Naive thymus-derived CD4-positive, alpha-beta T cell (primary cell): ENCODE measurements at regions of chr1 and their contacts with region 1.

Region 1: GRCh38 chr1:28505406-28506187 is at the start of gene RCC1:
- DNase-seq: peak; percentile 78 to 98 (median 96)
- ATAC-seq: peak; percentile 97
- H3K4me3 ChIP-seq: peak within 1 kb of the TSS; percentile 79
- H3K4me3 Mint-ChIP-seq: peak within 1 kb of the TSS; percentile 94 to 100 (median 99)
- H3K27ac ChIP-seq: peak within 1 kb of the TSS; percentile 88
- H3K27ac Mint-ChIP-seq: peak within 1 kb of the TSS; percentile 96 to 100 (median 99)
- H3K4me1 ChIP-seq: peaks cover 29 to 36% of the 10 kb centered on the region in 2 donors
- H3K4me1 Mint-ChIP-seq: peaks cover 29 to 48% (median 41%) of the 10 kb centered on the region in 7 donors
- H3K27me3 ChIP-seq: no peaks in the 10 kb centered on the region
- H3K27me3 Mint-ChIP-seq: peaks cover 0 to 3% (median 0%) of the 10 kb centered on the region in 5 donors
- total RNA-seq, gene RCC1: 9.8 to 60.7 (median 19.7) TPM

Region 2: GRCh38 chr1:27830621-27831424 is 674.8 kb before region 1 on chr1 and contains the start of gene PPP1R8:
- CTCF ChIA-PET with region 1: no interaction called
- POLR2A ChIA-PET with region 1: no interaction called
- intact Hi-C with region 1: loop called in 1 of 2 experiments (anchors 5 kb)
- DNase-seq: peak; percentile 57 to 89 (median 86)
- ATAC-seq: peak; percentile 100
- H3K4me3 ChIP-seq: peak within 1 kb of the TSS; percentile 71
- H3K4me3 Mint-ChIP-seq: peak within 1 kb of the TSS; percentile 90 to 96 (median 93)
- H3K27ac ChIP-seq: peak within 1 kb of the TSS; percentile 92
- H3K27ac Mint-ChIP-seq: peak within 1 kb of the TSS; percentile 86 to 96 (median 92)
- H3K4me1 ChIP-seq: peaks cover 16% of the 10 kb centered on the region in 2 donors
- H3K4me1 Mint-ChIP-seq: peaks cover 16 to 51% (median 38%) of the 10 kb centered on the region in 7 donors
- H3K27me3 ChIP-seq: no peaks in the 10 kb centered on the region
- H3K27me3 Mint-ChIP-seq: no peaks in the 10 kb centered on the region
- total RNA-seq, gene PPP1R8: 17.5 to 60.2 (median 39.5) TPM

Region 3: GRCh38 chr1:28369371-28370238 is 136.0 kb before region 1 on chr1 and contains the start of gene PHACTR4:
- CTCF ChIA-PET with region 1: no interaction called
- POLR2A ChIA-PET with region 1: interaction called, 4 read pairs
- intact Hi-C with region 1: loop called (anchors 2 to 5 kb)
- DNase-seq: peak; percentile 54 to 81 (median 66)
- ATAC-seq: peak; percentile 96
- H3K4me3 ChIP-seq: peak within 1 kb of the TSS; percentile 74
- H3K4me3 Mint-ChIP-seq: peak within 1 kb of the TSS; percentile 82 to 98 (median 94)
- H3K27ac ChIP-seq: peak within 1 kb of the TSS; percentile 79
- H3K27ac Mint-ChIP-seq: peak within 1 kb of the TSS; percentile 88 to 99 (median 91)
- H3K4me1 ChIP-seq: peaks cover 10 to 11% of the 10 kb centered on the region in 2 donors
- H3K4me1 Mint-ChIP-seq: peaks cover 11 to 40% (median 35%) of the 10 kb centered on the region in 7 donors
- H3K27me3 ChIP-seq: no peaks in the 10 kb centered on the region
- H3K27me3 Mint-ChIP-seq: peaks cover 0 to 2% (median 0%) of the 10 kb centered on the region in 5 donors
- total RNA-seq, gene PHACTR4: 19.8 to 29.0 (median 25.7) TPM

Region 4: GRCh38 chr1:28494737-28495136 is 10.9 kb before region 1 on chr1:
- CTCF ChIA-PET with region 1: interaction called, 4 read pairs
- POLR2A ChIA-PET with region 1: interaction called, 20 read pairs
- intact Hi-C with region 1: no loop called
- DNase-seq: peak in 1 of 9 donors; percentile 18
- ATAC-seq: no peak
- H3K4me3 ChIP-seq: no peak overlapping the region
- H3K4me3 Mint-ChIP-seq: peak overlapping the region in 6 of 10 donors; percentile 5 to 57 (median 32)
- H3K27ac ChIP-seq: peak overlapping the region; percentile 53
- H3K27ac Mint-ChIP-seq: peak overlapping the region; percentile 78 to 92 (median 85)
- H3K4me1 ChIP-seq: no peaks in the 10 kb centered on the region
- H3K4me1 Mint-ChIP-seq: peaks cover 6 to 24% (median 17%) of the 10 kb centered on the region in 7 donors
- H3K27me3 ChIP-seq: no peaks in the 10 kb centered on the region
- H3K27me3 Mint-ChIP-seq: no peaks in the 10 kb centered on the region

Region 5: DNA sequence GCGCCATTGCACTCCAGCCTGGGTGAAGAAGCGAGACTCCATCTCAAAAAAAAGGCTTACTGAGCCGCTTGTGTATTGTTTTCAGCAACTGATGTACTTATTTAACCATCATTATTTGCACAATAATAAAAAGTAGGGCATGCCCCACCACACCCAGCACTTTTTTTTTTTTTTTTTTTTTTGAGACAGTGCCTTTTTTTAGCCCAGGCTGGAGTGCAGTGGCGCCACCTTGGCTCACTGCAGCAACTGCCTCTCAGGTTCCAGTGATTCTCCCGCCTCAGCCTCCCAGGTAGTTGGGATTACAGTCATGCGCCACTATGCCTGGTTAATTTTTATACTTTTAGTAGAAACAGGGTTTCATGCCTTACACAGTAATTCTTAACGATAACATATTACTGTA is 35.1 kb after region 1 on chr1:
- CTCF ChIA-PET with region 1: no interaction called
- POLR2A ChIA-PET with region 1: no interaction called
- intact Hi-C with region 1: no loop called
- DNase-seq: no peak
- ATAC-seq: no peak
- H3K4me3 ChIP-seq: no peak overlapping the region
- H3K4me3 Mint-ChIP-seq: no peak overlapping the region
- H3K27ac ChIP-seq: no peak overlapping the region
- H3K27ac Mint-ChIP-seq: no peak overlapping the region
- H3K4me1 ChIP-seq: no peaks in the 10 kb centered on the region
- H3K4me1 Mint-ChIP-seq: no peaks in the 10 kb centered on the region
- H3K27me3 ChIP-seq: no peaks in the 10 kb centered on the region
- H3K27me3 Mint-ChIP-seq: no peaks in the 10 kb centered on the region

Region 6: GRCh38 chr1:28581536-28582247 is 76.1 kb after region 1 on chr1:
- CTCF ChIA-PET with region 1: interaction called, 3 read pairs
- POLR2A ChIA-PET with region 1: interaction called, 106 read pairs
- intact Hi-C with region 1: loop called (anchors 1 kb)
- DNase-seq: peak; percentile 85 to 96 (median 91)
- ATAC-seq: peak; percentile 95
- H3K4me3 ChIP-seq: peak overlapping the region; percentile 93
- H3K4me3 Mint-ChIP-seq: peak overlapping the region; percentile 94 to 99 (median 97)
- H3K27ac ChIP-seq: peak overlapping the region; percentile 84
- H3K27ac Mint-ChIP-seq: peak overlapping the region; percentile 86 to 96 (median 93)
- H3K4me1 ChIP-seq: peaks cover 20 to 23% of the 10 kb centered on the region in 2 donors
- H3K4me1 Mint-ChIP-seq: peaks cover 22 to 48% (median 37%) of the 10 kb centered on the region in 7 donors
- H3K27me3 ChIP-seq: no peaks in the 10 kb centered on the region
- H3K27me3 Mint-ChIP-seq: no peaks in the 10 kb centered on the region

Region 7: GRCh38 chr1:28668191-28668955 is 162.8 kb after region 1 on chr1 and contains the start of gene GMEB1:
- CTCF ChIA-PET with region 1: no interaction called
- POLR2A ChIA-PET with region 1: interaction called, 4 read pairs
- intact Hi-C with region 1: loop called (anchors 5 kb)
- DNase-seq: peak; percentile 70 to 91 (median 82)
- ATAC-seq: peak; percentile 81
- H3K4me3 ChIP-seq: peak within 1 kb of the TSS; percentile 81
- H3K4me3 Mint-ChIP-seq: peak within 1 kb of the TSS; percentile 89 to 97 (median 94)
- H3K27ac ChIP-seq: peak within 1 kb of the TSS; percentile 98
- H3K27ac Mint-ChIP-seq: peak within 1 kb of the TSS; percentile 94 to 100 (median 98)
- H3K4me1 ChIP-seq: peaks cover 3 to 6% of the 10 kb centered on the region in 2 donors
- H3K4me1 Mint-ChIP-seq: peaks cover 11 to 37% (median 25%) of the 10 kb centered on the region in 7 donors
- H3K27me3 ChIP-seq: no peaks in the 10 kb centered on the region
- H3K27me3 Mint-ChIP-seq: no peaks in the 10 kb centered on the region
- total RNA-seq, gene GMEB1: 15.8 to 26.7 (median 18.4) TPM